ENCODE measurements at regions of chr9 and their contacts with region 1.

Region 1: DNA sequence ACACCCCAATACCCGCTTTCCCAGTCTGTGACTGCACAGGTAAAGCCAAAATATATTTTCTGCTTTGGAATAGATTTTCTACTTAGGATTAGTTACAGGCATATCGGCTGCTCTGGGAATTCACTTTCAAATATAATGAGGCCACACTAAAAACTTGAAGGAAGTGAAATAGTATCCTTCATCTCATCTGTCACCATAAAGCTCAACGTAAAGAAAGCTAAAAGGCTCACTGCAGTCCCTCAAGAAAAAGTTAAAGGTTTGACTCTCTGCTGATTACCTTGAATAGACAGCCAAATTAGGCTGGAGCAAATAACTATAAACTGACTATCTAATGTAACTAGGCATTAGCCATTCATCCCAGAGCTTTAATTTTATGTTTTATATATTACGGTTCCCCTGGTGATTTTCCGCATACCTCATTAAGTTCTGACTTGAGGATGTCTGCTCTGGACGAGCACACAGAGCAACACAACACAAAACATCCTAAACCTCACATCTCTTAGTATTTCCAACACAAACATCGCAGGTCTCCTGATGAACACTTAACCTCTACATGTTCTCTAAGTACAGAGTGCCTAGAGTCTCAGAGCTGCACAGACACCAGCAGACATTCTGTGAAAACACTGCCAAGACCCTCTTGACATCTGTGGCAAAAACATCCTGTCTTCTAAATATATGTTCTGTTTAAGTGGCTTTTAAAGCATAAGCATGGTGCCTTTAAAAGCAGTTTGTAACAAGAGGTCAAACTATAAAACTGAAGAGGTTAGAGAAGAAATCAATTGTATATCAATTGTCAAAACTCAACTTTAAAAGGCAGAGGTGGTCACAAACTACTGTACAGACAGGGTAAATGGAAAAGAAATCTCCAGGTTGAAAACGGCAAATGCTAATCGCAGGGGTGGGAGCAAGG is 35.4 kb downstream of the ELAVL2 start:
- H3K4me3 ChIP-seq: no peak overlapping the region
- H3K27ac ChIP-seq: peak overlapping the region; percentile 32
- H3K4me1 ChIP-seq: peaks cover 17% of the 10 kb centered on the region
- CTCF ChIP-seq: no peak

Region 2: DNA sequence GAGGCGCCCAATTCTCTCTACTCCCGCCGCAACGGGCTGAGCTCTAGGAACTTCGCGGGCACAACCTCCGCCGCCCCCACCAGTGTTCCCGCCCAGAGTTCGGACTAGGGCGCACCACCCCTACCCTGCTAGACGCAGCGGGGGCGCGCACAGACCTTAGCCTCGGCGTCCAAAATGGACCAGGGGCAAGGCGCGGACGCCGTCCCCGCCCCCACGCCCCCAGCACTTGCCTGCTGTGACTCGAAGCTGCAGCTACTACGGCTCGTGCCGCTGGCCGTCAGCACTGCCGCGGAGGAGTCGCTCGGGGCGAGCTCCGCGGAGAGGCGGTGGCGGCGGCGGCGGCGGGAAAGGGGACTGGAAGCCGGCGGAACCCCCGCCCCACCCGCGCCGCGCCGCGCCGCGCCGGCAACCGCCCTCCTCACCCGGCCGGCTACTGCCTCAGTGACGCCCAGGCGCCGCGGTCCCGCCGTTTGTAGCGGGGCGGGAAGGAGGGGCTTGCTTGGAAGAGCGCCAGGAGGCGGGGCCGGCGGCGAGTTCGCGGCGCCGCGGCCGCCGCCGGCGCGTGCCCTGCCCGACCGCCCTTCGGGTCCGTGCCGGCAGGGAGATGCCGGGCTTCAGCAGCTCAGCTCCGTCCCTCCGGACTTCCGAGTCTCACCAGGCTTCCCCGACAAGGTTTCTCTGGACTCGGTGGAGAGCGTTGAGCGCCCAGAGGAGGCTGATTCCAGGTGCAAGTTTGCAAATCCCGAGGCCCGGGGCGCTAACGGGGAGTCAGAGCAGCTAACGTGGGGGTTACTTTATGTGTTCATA is 31.0 kb after region 1 on chr9:
- CTCF ChIA-PET with region 1: interaction called, 3 read pairs
- POLR2A ChIA-PET with region 1: interaction called, 11 read pairs
- H3K4me3 ChIP-seq: peak overlapping the region; percentile 79
- H3K27ac ChIP-seq: peak overlapping the region; percentile 94
- H3K4me1 ChIP-seq: peaks cover 12% of the 10 kb centered on the region
- CTCF ChIP-seq: peak; percentile 36; the same call in 1 of the 2 replicates